B cell (primary cell): ENCODE measurements at regions of chr1 and their contacts with region 1.

Region 1: GRCh38 chr1:164786980-164787833 is 228.2 kb downstream of the PBX1 start:
- DNase-seq: peak; percentile 63
- ATAC-seq: peak; percentile 62
- H3K4me3 ChIP-seq: no peak overlapping the region
- H3K4me3 Mint-ChIP-seq: no peak overlapping the region
- H3K27ac ChIP-seq: no peak overlapping the region
- H3K27ac Mint-ChIP-seq: no peak overlapping the region
- H3K4me1 ChIP-seq: no peaks in the 10 kb centered on the region
- H3K4me1 Mint-ChIP-seq: no peaks in the 10 kb centered on the region
- H3K27me3 ChIP-seq: peaks cover 0 to 6% (median 0%) of the 10 kb centered on the region in 4 experiments
- H3K27me3 Mint-ChIP-seq: peaks cover 16% of the 10 kb centered on the region
- CTCF ChIP-seq: peak; percentile 82

Region 2: GRCh38 chr1:163357378-163357777 is 1429.8 kb before region 1 on chr1:
- CTCF ChIA-PET with region 1: interaction called, 7 read pairs
- POLR2A ChIA-PET with region 1: no interaction called
- intact Hi-C with region 1: loop called (anchors 5 kb)
- DNase-seq: no peak
- ATAC-seq: no peak
- H3K4me3 ChIP-seq: no peak overlapping the region
- H3K4me3 Mint-ChIP-seq: no peak overlapping the region
- H3K27ac ChIP-seq: no peak overlapping the region
- H3K27ac Mint-ChIP-seq: no peak overlapping the region
- H3K4me1 ChIP-seq: peaks cover 0 to 5% of the 10 kb centered on the region in 2 donors
- H3K4me1 Mint-ChIP-seq: peaks cover 7% of the 10 kb centered on the region
- H3K27me3 ChIP-seq: no peaks in the 10 kb centered on the region
- H3K27me3 Mint-ChIP-seq: peaks cover 3% of the 10 kb centered on the region
- CTCF ChIP-seq: no peak

Region 3: GRCh38 chr1:163410073-163410999 is 1376.9 kb before region 1 on chr1:
- CTCF ChIA-PET with region 1: interaction called, 13 read pairs
- POLR2A ChIA-PET with region 1: no interaction called
- intact Hi-C with region 1: no loop called
- DNase-seq: peak; percentile 52
- ATAC-seq: no peak
- H3K4me3 ChIP-seq: no peak overlapping the region
- H3K4me3 Mint-ChIP-seq: no peak overlapping the region
- H3K27ac ChIP-seq: no peak overlapping the region
- H3K27ac Mint-ChIP-seq: no peak overlapping the region
- H3K4me1 ChIP-seq: peaks cover 7 to 13% of the 10 kb centered on the region in 2 donors
- H3K4me1 Mint-ChIP-seq: peaks cover 17% of the 10 kb centered on the region
- H3K27me3 ChIP-seq: peaks cover 0 to 3% (median 0%) of the 10 kb centered on the region in 4 experiments
- H3K27me3 Mint-ChIP-seq: peaks cover 5% of the 10 kb centered on the region
- CTCF ChIP-seq: peak; percentile 81

Region 4: GRCh38 chr1:164748253-164748899 is 38.8 kb before region 1 on chr1:
- CTCF ChIA-PET with region 1: no interaction called
- POLR2A ChIA-PET with region 1: no interaction called
- intact Hi-C with region 1: no loop called
- DNase-seq: no peak
- ATAC-seq: no peak
- H3K4me3 ChIP-seq: no peak overlapping the region
- H3K4me3 Mint-ChIP-seq: no peak overlapping the region
- H3K27ac ChIP-seq: no peak overlapping the region
- H3K27ac Mint-ChIP-seq: no peak overlapping the region
- H3K4me1 ChIP-seq: no peaks in the 10 kb centered on the region
- H3K4me1 Mint-ChIP-seq: no peaks in the 10 kb centered on the region
- H3K27me3 ChIP-seq: no peaks in the 10 kb centered on the region
- H3K27me3 Mint-ChIP-seq: peaks cover 5% of the 10 kb centered on the region
- CTCF ChIP-seq: no peak

Region 5: DNA sequence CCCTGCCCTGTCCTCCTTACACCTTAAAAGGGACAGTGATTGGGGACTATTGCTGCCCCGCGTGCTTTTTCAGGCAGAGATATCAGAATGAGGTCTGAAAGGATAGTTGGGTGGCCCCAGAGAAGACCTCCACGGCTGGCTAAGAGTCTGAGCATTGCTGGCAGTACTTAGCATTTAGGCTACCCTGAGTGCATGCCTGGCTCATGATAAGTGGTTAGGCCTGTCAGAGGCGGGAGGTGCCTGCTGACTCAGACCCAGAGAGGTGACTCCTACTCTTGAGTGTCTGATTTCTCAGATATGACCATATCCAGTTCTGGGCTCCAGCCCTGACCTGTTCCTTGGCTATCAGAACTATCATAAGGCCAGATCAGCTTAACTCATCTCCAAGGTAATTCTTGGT is 14.6 kb before region 1 on chr1:
- CTCF ChIA-PET with region 1: interaction called, 17 read pairs
- POLR2A ChIA-PET with region 1: no interaction called
- intact Hi-C with region 1: no loop called
- DNase-seq: no peak
- ATAC-seq: no peak
- H3K4me3 ChIP-seq: no peak overlapping the region
- H3K4me3 Mint-ChIP-seq: no peak overlapping the region
- H3K27ac ChIP-seq: no peak overlapping the region
- H3K27ac Mint-ChIP-seq: no peak overlapping the region
- H3K4me1 ChIP-seq: no peaks in the 10 kb centered on the region
- H3K4me1 Mint-ChIP-seq: no peaks in the 10 kb centered on the region
- H3K27me3 ChIP-seq: no peaks in the 10 kb centered on the region
- H3K27me3 Mint-ChIP-seq: no peaks in the 10 kb centered on the region
- CTCF ChIP-seq: no peak

Region 6: GRCh38 chr1:164805399-164805798 is 18.2 kb after region 1 on chr1:
- CTCF ChIA-PET with region 1: interaction called, 16 read pairs
- POLR2A ChIA-PET with region 1: no interaction called
- intact Hi-C with region 1: no loop called
- DNase-seq: no peak
- ATAC-seq: no peak
- H3K4me3 ChIP-seq: no peak overlapping the region
- H3K4me3 Mint-ChIP-seq: no peak overlapping the region
- H3K27ac ChIP-seq: no peak overlapping the region
- H3K27ac Mint-ChIP-seq: no peak overlapping the region
- H3K4me1 ChIP-seq: no peaks in the 10 kb centered on the region
- H3K4me1 Mint-ChIP-seq: no peaks in the 10 kb centered on the region
- H3K27me3 ChIP-seq: peaks cover 0 to 5% (median 2%) of the 10 kb centered on the region in 4 experiments
- H3K27me3 Mint-ChIP-seq: peaks cover 10% of the 10 kb centered on the region
- CTCF ChIP-seq: no peak